Psoas muscle (tissue), 8 donors: ENCODE measurements at regions of chr4 and their contacts with region 1.

Region 1: GRCh38 chr4:168794881-168795280 is 215.2 kb downstream of the CBR4 start:
- DNase-seq: no peak
- ATAC-seq: no peak
- H3K4me3 ChIP-seq: no peak overlapping the region
- H3K27ac ChIP-seq: peak overlapping the region; percentile 64
- H3K4me1 ChIP-seq: peaks cover 31% of the 10 kb centered on the region
- H3K27me3 ChIP-seq: no peaks in the 10 kb centered on the region
- CTCF ChIP-seq: no peak

Region 2: GRCh38 chr4:168758351-168758876 is 36.5 kb before region 1 on chr4:
- intact Hi-C with region 1: loop called in 1 of 2 experiments (anchors 5 kb)
- DNase-seq: no peak
- ATAC-seq: no peak
- H3K4me3 ChIP-seq: no peak overlapping the region
- H3K27ac ChIP-seq: peak overlapping the region; percentile 54
- H3K4me1 ChIP-seq: peaks cover 8% of the 10 kb centered on the region
- H3K27me3 ChIP-seq: no peaks in the 10 kb centered on the region
- CTCF ChIP-seq: no peak

Region 3: GRCh38 chr4:169106696-169107229 is 311.9 kb after region 1 on chr4:
- intact Hi-C with region 1: no loop called
- DNase-seq: no peak
- ATAC-seq: no peak
- H3K4me3 ChIP-seq: no peak overlapping the region
- H3K27ac ChIP-seq: no peak overlapping the region
- H3K4me1 ChIP-seq: no peaks in the 10 kb centered on the region
- H3K27me3 ChIP-seq: no peaks in the 10 kb centered on the region
- CTCF ChIP-seq: no peak